ENCODE measurements at regions of chrX and their contacts with region 1.

Region 1: GRCh38 chrX:1537035-1537715 is at the start of gene P2RY8:
- DNase-seq: peak; percentile 78 to 86 (median 81)
- H3K4me3 ChIP-seq: peak within 1 kb of the TSS; percentile 94
- H3K4me3 Mint-ChIP-seq: peak within 1 kb of the TSS; percentile 93 to 99 (median 98)
- H3K27ac ChIP-seq: peak within 1 kb of the TSS; percentile 78
- H3K27ac Mint-ChIP-seq: peak within 1 kb of the TSS; percentile 95 to 100 (median 98)
- H3K4me1 ChIP-seq: peaks cover 24% of the 10 kb centered on the region
- H3K4me1 Mint-ChIP-seq: peaks cover 12 to 34% (median 15%) of the 10 kb centered on the region in 4 donors
- H3K27me3 ChIP-seq: no peaks in the 10 kb centered on the region
- H3K27me3 Mint-ChIP-seq: no peaks in the 10 kb centered on the region
- total RNA-seq, gene P2RY8: 195 TPM

Region 2: DNA sequence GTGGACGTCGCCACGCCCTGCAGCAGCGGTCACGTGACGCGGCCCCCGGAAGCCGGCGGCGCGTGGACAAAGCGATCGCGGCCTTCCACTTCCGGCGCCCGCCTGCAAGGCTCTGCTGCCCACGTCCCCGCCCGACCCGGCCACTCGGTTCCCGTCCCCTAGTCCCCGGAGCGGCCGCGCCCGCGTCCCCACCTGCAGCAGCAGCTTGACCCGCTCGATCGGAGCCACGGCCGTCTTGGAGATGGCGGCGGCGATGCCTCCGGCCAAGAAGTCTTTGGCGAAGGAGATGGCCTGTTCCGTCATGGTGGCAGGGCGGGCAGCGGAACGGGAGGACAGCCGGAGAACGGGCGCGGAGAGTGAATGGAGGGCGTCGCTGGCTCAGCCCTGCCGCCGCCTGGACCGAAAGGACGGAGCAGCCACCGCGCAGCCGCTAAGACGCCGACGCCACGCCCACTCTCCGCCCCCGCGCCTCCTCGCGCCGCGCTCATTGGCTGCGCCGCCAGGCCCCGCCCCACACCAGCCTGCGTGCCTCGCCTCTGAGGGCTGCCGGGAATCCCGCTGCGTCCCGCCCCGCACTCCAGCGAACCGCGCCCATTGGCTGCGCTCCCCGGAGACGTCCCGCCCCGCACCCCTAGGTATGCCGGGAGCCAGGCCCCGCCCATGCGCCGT is 145.3 kb before region 1 on chrX and contains the start of gene SLC25A6:
- CTCF ChIA-PET with region 1: no interaction called
- POLR2A ChIA-PET with region 1: no interaction called
- intact Hi-C with region 1: loop called (anchors 1 kb)
- DNase-seq: peak; percentile 98 to 99 (median 99)
- H3K4me3 ChIP-seq: peak within 1 kb of the TSS; percentile 61 to 94
- H3K4me3 Mint-ChIP-seq: peak within 1 kb of the TSS; percentile 88 to 94 (median 91)
- H3K27ac ChIP-seq: peak within 1 kb of the TSS; percentile 94
- H3K27ac Mint-ChIP-seq: peak within 1 kb of the TSS; percentile 83 to 96 (median 90)
- H3K4me1 ChIP-seq: peaks cover 47% of the 10 kb centered on the region
- H3K4me1 Mint-ChIP-seq: peaks cover 16 to 52% (median 34%) of the 10 kb centered on the region in 4 donors
- H3K27me3 ChIP-seq: no peaks in the 10 kb centered on the region
- H3K27me3 Mint-ChIP-seq: no peaks in the 10 kb centered on the region
- total RNA-seq, gene SLC25A6: 249 to 252 TPM

Region 3: GRCh38 chrX:1491851-1492349 is 45.3 kb before region 1 on chrX:
- CTCF ChIA-PET with region 1: no interaction called
- POLR2A ChIA-PET with region 1: no interaction called
- intact Hi-C with region 1: loop called (anchors 2 kb)
- DNase-seq: peak; percentile 55 to 74 (median 71)
- H3K4me3 ChIP-seq: no peak overlapping the region
- H3K4me3 Mint-ChIP-seq: peak overlapping the region in 3 of 8 donors; percentile 8 to 36 (median 21)
- H3K27ac ChIP-seq: no peak overlapping the region
- H3K27ac Mint-ChIP-seq: peak overlapping the region; percentile 48 to 92 (median 87)
- H3K4me1 ChIP-seq: peaks cover 11% of the 10 kb centered on the region
- H3K4me1 Mint-ChIP-seq: peaks cover 16 to 45% (median 32%) of the 10 kb centered on the region in 4 donors
- H3K27me3 ChIP-seq: no peaks in the 10 kb centered on the region
- H3K27me3 Mint-ChIP-seq: no peaks in the 10 kb centered on the region

Region 4: GRCh38 chrX:1502241-1502640 is 34.9 kb before region 1 on chrX:
- CTCF ChIA-PET with region 1: no interaction called
- POLR2A ChIA-PET with region 1: no interaction called
- intact Hi-C with region 1: no loop called
- DNase-seq: no peak
- H3K4me3 ChIP-seq: no peak overlapping the region
- H3K4me3 Mint-ChIP-seq: peak overlapping the region in 1 of 8 donors; percentile 17
- H3K27ac ChIP-seq: peak overlapping the region; percentile 1
- H3K27ac Mint-ChIP-seq: peak overlapping the region in 6 of 7 donors; percentile 59 to 88 (median 72)
- H3K4me1 ChIP-seq: peaks cover 39% of the 10 kb centered on the region
- H3K4me1 Mint-ChIP-seq: peaks cover 22 to 52% (median 32%) of the 10 kb centered on the region in 4 donors
- H3K27me3 ChIP-seq: no peaks in the 10 kb centered on the region
- H3K27me3 Mint-ChIP-seq: no peaks in the 10 kb centered on the region

Region 5: GRCh38 chrX:1554469-1555210 is 17.5 kb after region 1 on chrX:
- CTCF ChIA-PET with region 1: no interaction called
- POLR2A ChIA-PET with region 1: no interaction called
- intact Hi-C with region 1: loop called (anchors 1 kb)
- DNase-seq: peak; percentile 78 to 88 (median 82)
- H3K4me3 ChIP-seq: peak overlapping the region; percentile 24 to 33
- H3K4me3 Mint-ChIP-seq: peak overlapping the region; percentile 48 to 86 (median 79)
- H3K27ac ChIP-seq: peak overlapping the region; percentile 56
- H3K27ac Mint-ChIP-seq: peak overlapping the region; percentile 94 to 98 (median 98)
- H3K4me1 ChIP-seq: peaks cover 91% of the 10 kb centered on the region
- H3K4me1 Mint-ChIP-seq: peaks cover 44 to 85% (median 66%) of the 10 kb centered on the region in 4 donors
- H3K27me3 ChIP-seq: no peaks in the 10 kb centered on the region
- H3K27me3 Mint-ChIP-seq: no peaks in the 10 kb centered on the region

Region 6: DNA sequence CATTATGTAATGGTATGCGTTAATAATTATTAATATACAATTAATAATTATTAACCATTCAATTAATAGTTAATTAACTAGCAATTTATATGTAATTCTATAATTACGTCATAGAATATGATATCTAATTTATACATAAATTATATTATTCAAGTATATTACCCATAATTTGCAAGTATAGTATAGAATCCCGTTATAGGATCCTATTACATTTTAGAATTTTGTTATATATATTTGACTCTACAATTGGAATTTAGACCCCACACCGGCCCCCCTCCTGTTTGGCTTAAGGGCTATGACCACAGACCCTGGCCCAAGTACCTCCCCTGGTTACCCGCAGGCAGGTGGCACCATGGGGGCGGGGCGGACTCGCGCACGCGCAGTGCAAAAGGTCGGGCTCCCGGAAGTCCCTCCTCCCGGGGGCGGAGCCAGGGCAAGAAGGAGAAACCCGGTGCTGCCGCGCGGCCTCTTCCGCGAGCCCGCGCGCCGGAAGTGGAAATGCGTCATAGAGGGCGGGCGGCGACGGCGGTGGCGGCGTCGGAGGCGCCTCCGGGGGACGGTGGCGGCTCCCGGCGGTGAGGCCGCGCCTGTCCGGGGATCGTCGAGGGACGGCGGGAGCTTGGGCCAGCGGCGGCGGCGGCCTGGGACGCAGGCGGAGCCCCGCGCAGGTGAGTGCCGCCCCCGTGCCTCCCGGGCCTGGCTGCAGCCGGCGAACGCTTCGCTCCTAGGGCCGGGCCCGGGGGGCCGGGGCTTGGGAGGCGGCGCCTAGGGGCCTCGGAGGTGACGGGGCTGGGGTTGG is 54.1 kb after region 1 on chrX and contains the start of gene AKAP17A:
- CTCF ChIA-PET with region 1: no interaction called
- POLR2A ChIA-PET with region 1: no interaction called
- intact Hi-C with region 1: loop called (anchors 2 kb)
- DNase-seq: peak; percentile 93 to 99 (median 97)
- H3K4me3 ChIP-seq: peak within 1 kb of the TSS; percentile 21 to 77
- H3K4me3 Mint-ChIP-seq: peak within 1 kb of the TSS; percentile 89 to 93 (median 92)
- H3K27ac ChIP-seq: peak within 1 kb of the TSS; percentile 73
- H3K27ac Mint-ChIP-seq: peak within 1 kb of the TSS; percentile 92 to 96 (median 94)
- H3K4me1 ChIP-seq: peaks cover 41% of the 10 kb centered on the region
- H3K4me1 Mint-ChIP-seq: peaks cover 10 to 33% (median 24%) of the 10 kb centered on the region in 4 donors
- H3K27me3 ChIP-seq: no peaks in the 10 kb centered on the region
- H3K27me3 Mint-ChIP-seq: no peaks in the 10 kb centered on the region
- total RNA-seq, gene AKAP17A: 147 to 150 TPM